Mucosa of descending colon (tissue), 3 donors: ENCODE measurements at regions of chrX and their contacts with region 1.

Region 1: DNA sequence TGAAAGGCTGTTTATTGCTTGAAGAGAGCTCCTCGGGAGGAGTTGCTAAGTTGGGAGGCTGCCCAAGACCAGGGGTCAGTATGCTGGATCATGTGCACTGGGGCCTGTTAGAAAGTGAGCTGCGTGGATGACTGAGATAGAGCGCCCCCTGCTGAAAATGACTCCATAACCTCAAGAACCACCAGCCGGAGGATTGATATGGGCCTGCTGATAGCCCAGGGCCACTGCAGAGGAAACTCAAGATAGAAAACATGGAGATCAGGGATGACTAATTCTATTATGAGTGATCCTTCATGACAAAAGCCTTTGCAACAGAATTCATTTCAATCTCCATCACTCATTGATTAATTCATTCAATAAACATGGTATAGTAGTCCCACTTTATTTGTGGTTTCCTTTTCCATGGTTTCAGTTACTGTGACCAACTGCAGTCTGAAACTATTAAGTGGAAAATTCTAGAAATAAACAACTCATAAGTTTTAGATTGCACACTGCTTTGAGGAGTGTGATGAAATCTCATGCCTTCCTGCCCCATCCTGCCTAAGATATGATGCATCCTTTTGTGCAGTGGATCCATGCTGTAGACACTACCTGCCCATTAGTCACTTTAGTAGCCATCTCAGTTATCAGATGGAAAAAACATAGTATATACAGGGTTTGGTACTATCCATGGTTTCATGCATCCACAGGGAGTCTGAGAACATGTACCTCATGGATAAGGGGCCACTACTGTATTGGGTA is 126.7 kb upstream of the MBNL3 start:
- DNase-seq: peak in 2 of 3 donors; percentile 16 to 74
- ATAC-seq: peak; percentile 66
- H3K4me3 ChIP-seq: no peak overlapping the region
- H3K4me1 ChIP-seq: no peaks in the 10 kb centered on the region
- CTCF ChIP-seq: peak; percentile 14

Region 2: GRCh38 chrX:132292793-132293192 is 322.8 kb before region 1 on chrX:
- intact Hi-C with region 1: loop called in 1 of 2 experiments (anchors 5 kb)
- DNase-seq: peak in 1 of 3 donors; percentile 15
- ATAC-seq: peak; percentile 68
- H3K4me3 ChIP-seq: no peak overlapping the region
- H3K4me1 ChIP-seq: no peaks in the 10 kb centered on the region
- CTCF ChIP-seq: peak; percentile 10

Region 3: GRCh38 chrX:132740316-132741123 is 125.0 kb after region 1 on chrX:
- intact Hi-C with region 1: no loop called
- DNase-seq: no peak
- ATAC-seq: no peak
- H3K4me3 ChIP-seq: no peak overlapping the region
- H3K4me1 ChIP-seq: no peaks in the 10 kb centered on the region
- CTCF ChIP-seq: peak; percentile 22

Region 4: DNA sequence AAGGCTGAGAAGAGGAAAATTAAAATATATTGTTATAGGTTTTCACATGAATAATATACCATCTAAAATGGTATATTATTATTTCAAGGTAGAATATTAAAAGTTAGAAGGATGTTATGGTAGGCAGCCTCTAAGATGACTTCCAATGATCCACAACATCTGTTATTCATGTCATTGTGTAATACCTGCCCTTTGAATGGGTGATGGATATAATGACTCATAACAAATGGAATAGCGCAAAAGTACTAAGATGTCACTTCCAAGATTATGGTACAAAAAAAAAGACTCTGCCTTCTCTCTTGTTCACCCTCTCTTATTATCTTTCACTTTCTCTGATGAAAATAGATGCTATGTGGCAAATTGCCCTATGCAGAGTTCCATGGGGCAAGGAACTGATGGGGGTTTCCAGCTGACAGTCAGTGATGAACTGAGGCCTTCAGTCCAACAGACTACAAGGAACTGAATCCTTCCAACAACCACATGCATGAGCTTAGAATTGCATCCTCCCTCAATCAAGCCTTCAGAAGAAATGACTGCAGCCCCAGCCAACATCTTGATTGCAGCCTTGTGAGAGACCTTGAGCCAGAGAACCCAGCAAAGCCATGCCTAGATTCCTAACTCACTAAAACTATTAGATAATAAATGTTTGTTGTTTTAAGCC is 285.2 kb after region 1 on chrX:
- intact Hi-C with region 1: no loop called
- DNase-seq: no peak
- ATAC-seq: no peak
- H3K4me3 ChIP-seq: no peak overlapping the region
- H3K4me1 ChIP-seq: no peaks in the 10 kb centered on the region
- CTCF ChIP-seq: no peak